Activated T-helper 1 cell treated with anti-CD3 and anti-CD28 coated beads, Interleukin-12 subunit alpha, Interleukin-12 subunit beta, Interleukin-2, Interleukin-4 antibody, amounts not matched to agents 30 ng/mL and 10 ng/mL and 1 ng/mL, durations not matched to agents 14 hours and 24 hours and 36 hours (primary cell): ENCODE measurements at regions of chr5 and their contacts with region 1.

Region 1: DNA sequence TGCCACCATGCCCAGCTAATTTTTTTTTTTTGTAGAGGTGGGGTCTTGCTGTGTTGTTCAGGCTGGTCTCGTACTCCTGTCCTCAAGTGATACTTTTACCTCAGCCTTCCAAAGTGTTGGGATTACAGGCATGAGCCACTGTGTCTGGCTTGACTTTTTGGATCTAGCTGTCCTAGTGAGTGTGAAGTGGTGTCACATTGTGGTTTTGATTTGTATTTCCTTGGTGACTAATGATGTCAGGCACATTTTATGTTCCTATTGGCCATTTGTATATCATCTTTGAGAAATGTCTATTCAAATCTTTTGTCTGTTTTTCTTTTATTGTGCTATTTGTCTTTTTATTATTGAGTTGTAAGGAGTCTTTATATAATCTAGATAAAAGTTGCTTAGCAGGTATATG is 53.5 kb upstream of the MCCC2 start:
- DNase-seq: no peak
- H3K4me3 Mint-ChIP-seq: no peak overlapping the region
- H3K27ac Mint-ChIP-seq: peak overlapping the region; percentile 80
- H3K4me1 Mint-ChIP-seq: peaks cover 23% of the 10 kb centered on the region
- H3K27me3 Mint-ChIP-seq: no peaks in the 10 kb centered on the region

Region 2: GRCh38 chr5:71455427-71456361 is 77.9 kb before region 1 on chr5 and contains the start of gene BDP1:
- intact Hi-C with region 1: loop called (anchors 5 kb)
- DNase-seq: peak; percentile 94
- H3K4me3 Mint-ChIP-seq: peak within 1 kb of the TSS; percentile 98
- H3K27ac Mint-ChIP-seq: peak within 1 kb of the TSS; percentile 100
- H3K4me1 Mint-ChIP-seq: peaks cover 30% of the 10 kb centered on the region
- H3K27me3 Mint-ChIP-seq: peaks cover under 1% of the 10 kb centered on the region
- total RNA-seq, gene BDP1: 41.2 and 41.5 TPM in 2 replicates

Region 3: GRCh38 chr5:71475788-71476384 is 57.7 kb before region 1 on chr5:
- intact Hi-C with region 1: no loop called
- DNase-seq: no peak
- H3K4me3 Mint-ChIP-seq: no peak overlapping the region
- H3K27ac Mint-ChIP-seq: no peak overlapping the region
- H3K4me1 Mint-ChIP-seq: no peaks in the 10 kb centered on the region
- H3K27me3 Mint-ChIP-seq: no peaks in the 10 kb centered on the region

Region 4: DNA sequence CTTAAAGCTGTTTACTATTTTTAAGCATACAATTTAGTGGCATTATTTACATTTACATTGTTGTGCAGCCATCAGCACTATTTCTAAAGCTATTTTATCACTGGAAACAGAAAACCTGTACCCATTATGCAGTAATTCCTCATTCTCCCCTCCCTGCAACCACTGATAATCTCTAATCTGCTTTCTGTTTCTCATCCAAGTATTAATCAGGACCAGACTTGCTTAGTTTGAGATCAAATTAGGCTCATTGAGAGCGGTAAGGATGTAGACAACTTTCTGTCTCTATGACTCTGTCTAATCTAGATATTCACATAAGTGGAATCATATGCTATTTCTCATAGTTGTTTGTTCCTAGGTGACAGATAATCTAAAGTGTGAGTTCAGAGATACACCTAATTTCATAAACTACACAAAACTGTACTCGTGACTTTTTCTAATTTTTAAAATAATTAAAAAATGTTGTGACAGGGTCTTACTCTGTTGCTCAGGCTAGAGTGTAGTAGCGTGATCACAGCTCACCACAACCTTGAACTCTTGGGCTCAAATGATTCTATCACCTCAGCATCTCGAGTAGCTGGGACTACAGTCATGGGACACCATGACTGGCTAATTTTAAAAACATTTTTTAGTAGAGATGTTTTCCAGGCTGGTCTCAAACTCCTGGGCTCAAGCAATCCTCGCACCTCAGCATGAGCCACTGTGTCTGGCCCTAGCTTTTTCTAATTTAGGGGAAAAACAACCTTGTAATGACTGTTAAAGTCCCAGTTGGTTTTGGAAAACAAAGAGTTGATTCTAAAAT is 40.6 kb before region 1 on chr5:
- intact Hi-C with region 1: loop called (anchors 1 kb)
- DNase-seq: no peak
- H3K4me3 Mint-ChIP-seq: no peak overlapping the region
- H3K27ac Mint-ChIP-seq: no peak overlapping the region
- H3K4me1 Mint-ChIP-seq: no peaks in the 10 kb centered on the region
- H3K27me3 Mint-ChIP-seq: no peaks in the 10 kb centered on the region

Region 5: DNA sequence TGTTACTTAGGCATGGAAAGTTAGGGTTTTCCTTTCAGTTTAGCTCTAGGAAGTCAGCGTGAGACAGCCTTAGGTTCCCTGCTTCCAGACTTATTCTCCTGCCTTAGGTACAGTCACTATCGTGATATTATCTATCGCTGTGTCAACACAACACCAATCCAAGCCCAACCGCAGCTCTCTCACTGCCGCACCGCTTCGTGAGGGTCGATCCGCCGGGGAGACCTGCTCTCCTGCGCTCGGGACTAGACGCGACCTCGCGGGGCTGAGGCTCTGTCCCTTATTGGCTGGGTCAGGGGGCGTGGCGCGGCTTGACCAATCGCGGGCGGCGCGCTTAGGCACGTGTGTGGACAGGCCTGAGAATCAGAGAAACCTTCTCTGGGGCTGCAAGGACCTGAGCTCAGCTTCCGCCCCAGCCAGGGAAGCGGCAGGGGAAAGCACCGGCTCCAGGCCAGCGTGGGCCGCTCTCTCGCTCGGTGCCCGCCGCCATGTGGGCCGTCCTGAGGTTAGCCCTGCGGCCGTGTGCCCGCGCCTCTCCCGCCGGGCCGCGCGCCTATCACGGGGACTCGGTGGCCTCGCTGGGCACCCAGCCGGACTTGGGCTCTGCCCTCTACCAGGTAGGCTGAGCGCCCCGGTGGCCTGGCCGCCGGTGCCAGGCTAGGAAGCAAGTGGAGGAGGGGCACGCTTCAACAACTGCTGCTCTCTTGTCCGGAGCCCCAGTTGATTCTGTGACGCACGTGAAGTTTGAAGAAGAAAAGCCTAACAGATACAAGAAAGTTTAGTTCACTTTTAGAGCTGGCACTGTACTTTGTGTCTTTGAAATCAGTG is 53.5 kb after region 1 on chr5 and contains the start of gene MCCC2:
- intact Hi-C with region 1: loop called (anchors 5 kb)
- DNase-seq: peak; percentile 96
- H3K4me3 Mint-ChIP-seq: peak within 1 kb of the TSS; percentile 95
- H3K27ac Mint-ChIP-seq: peak within 1 kb of the TSS; percentile 99
- H3K4me1 Mint-ChIP-seq: peaks cover 36% of the 10 kb centered on the region
- H3K27me3 Mint-ChIP-seq: no peaks in the 10 kb centered on the region
- total RNA-seq, gene MCCC2: 49.8 and 53.8 TPM in 2 replicates

Region 6: DNA sequence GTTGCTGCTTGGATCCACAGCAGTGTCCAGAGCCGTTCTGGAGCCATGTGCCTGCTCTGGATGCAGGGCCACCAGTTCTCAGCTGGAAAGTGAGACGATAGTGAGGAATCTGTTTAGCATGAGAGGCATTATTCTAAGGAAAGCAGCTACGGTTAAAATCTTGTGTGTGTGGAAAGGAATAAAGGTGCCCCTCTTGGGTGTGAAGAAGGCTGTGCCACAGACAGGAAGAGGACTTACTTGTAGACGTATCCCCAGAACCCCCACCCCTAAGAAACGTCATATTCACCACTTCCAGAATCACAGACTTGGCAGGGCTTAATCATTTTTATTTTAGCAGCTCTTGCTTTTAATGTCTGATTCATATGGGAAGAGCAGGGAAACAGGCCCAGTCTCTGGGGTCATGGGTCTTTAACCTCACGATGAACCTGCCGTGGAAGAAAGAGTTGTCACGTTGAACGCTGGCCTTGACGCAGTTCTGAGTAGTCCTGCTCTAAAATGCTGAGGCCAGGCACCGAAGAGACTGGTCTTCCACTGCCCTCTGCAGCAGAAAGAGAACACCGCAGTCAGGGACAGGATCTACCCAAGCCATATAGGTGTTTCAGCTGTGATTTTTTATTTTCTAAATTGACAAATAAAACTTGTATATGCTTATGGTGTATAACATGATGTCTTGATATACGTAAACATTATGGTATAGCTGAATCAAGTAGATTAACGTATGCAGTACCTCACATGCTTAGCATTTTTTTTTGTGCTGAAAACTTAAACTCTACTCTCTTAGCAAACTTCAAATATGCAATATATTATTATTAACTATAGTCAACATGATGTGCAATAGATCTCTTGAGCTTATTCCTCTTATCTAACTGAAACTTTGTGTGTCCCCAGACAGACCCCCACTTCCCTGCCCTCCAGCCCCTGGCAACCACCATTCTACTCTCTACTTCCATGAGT is 224.3 kb after region 1 on chr5:
- intact Hi-C with region 1: loop called (anchors 5 kb)
- DNase-seq: peak; percentile 17
- H3K4me3 Mint-ChIP-seq: no peak overlapping the region
- H3K27ac Mint-ChIP-seq: no peak overlapping the region
- H3K4me1 Mint-ChIP-seq: peaks cover 6% of the 10 kb centered on the region
- H3K27me3 Mint-ChIP-seq: peaks cover 4% of the 10 kb centered on the region